GM18951 (cell line): ENCODE measurements at regions of chr6 and their contacts with region 1.

Region 1: GRCh38 chr6:43769526-43770416 is at the start of gene VEGFA:
- POLR2A ChIP-seq: peak; percentile 83

Region 2: GRCh38 chr6:44074439-44075136 is 304.8 kb after region 1 on chr6:
- in situ Hi-C with region 1: loop called (anchors 10 kb)
- POLR2A ChIP-seq: no peak